Activated B cell treated with CpG ODN at 0.5 μM for 24 hours (primary cell): ENCODE measurements at regions of chr1 and their contacts with region 1.

Region 1: GRCh38 chr1:109426278-109427170 is at the start of gene PSMA5:
- DNase-seq: peak; percentile 81
- ATAC-seq: peak; percentile 97
- H3K4me3 Mint-ChIP-seq: peak within 1 kb of the TSS; percentile 96
- H3K27ac Mint-ChIP-seq: peak within 1 kb of the TSS; percentile 97
- H3K4me1 Mint-ChIP-seq: peaks cover 37% of the 10 kb centered on the region
- H3K27me3 Mint-ChIP-seq: no peaks in the 10 kb centered on the region
- CTCF ChIP-seq: no peak
- total RNA-seq, gene PSMA5: 105 and 125 TPM in 2 replicates

Region 2: DNA sequence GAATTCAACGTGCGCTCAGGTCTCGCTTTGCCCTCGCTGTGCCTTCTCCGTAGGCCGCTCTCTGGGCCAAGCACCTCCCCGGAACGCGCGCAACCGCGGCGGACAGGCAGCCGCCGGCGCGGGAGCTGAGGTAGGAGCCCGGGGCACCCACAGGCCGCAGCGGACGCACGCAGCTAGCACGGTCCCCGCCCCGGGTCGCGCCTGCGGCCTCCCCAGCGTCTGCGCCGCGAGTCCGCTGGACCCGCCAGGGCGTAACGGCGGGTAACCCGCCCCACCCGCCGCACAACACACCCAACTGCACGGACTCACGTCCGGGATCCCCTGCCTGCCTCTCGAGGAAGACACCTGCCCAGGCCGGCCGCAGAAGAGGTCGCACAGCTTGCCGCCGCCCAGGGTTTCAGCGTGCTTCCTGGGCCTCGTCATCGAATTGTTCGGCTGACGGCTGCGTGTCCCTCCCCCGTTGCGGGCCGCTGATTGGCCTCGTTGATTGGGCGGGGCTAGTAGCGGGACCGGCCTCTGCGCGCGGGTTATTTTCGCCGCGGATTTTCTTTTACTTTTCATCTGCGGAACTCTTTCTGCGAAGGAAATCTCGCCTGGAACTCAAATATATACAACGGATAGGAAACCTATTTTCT is 463.4 kb before region 1 on chr1 and contains the start of gene CLCC1:
- CTCF ChIA-PET with region 1: no interaction called
- POLR2A ChIA-PET with region 1: no interaction called
- intact Hi-C with region 1: loop called (anchors 2 kb)
- DNase-seq: peak; percentile 84
- ATAC-seq: peak; percentile 94
- H3K4me3 Mint-ChIP-seq: peak within 1 kb of the TSS; percentile 88
- H3K27ac Mint-ChIP-seq: peak within 1 kb of the TSS; percentile 91
- H3K4me1 Mint-ChIP-seq: peaks cover 35% of the 10 kb centered on the region
- H3K27me3 Mint-ChIP-seq: no peaks in the 10 kb centered on the region
- CTCF ChIP-seq: no peak
- total RNA-seq, gene CLCC1: 19.5 and 28.3 TPM in 2 replicates

Region 3: GRCh38 chr1:109099938-109100773 is 326.4 kb before region 1 on chr1:
- CTCF ChIA-PET with region 1: no interaction called
- POLR2A ChIA-PET with region 1: interaction called, 4 read pairs
- intact Hi-C with region 1: loop called (anchors 1 kb)
- DNase-seq: peak; percentile 93
- ATAC-seq: peak; percentile 88
- H3K4me3 Mint-ChIP-seq: peak overlapping the region; percentile 95
- H3K27ac Mint-ChIP-seq: peak overlapping the region; percentile 98
- H3K4me1 Mint-ChIP-seq: peaks cover 19% of the 10 kb centered on the region
- H3K27me3 Mint-ChIP-seq: no peaks in the 10 kb centered on the region
- CTCF ChIP-seq: peak; percentile 37

Region 4: DNA sequence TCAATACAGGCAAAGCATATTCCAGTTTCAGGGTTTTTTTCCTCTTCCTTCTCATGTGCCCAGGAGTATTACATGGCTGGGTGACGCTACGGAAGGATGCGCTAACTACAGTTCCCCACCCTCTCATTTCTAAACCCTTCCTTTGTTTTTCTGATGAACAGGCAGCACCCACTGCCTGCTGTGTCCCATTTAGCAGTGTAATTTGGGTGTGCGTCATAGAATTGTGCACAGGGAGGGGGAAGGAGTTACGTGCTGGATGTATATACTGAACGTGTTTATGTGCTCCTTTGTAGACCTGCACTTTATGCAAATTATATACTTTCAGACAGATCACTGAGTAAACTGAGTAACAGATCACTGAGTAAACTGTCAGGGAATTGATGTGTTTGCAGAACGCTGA is 268.1 kb before region 1 on chr1:
- CTCF ChIA-PET with region 1: no interaction called
- POLR2A ChIA-PET with region 1: no interaction called
- intact Hi-C with region 1: no loop called
- DNase-seq: no peak
- ATAC-seq: no peak
- H3K4me3 Mint-ChIP-seq: no peak overlapping the region
- H3K27ac Mint-ChIP-seq: no peak overlapping the region
- H3K4me1 Mint-ChIP-seq: peaks cover 17% of the 10 kb centered on the region
- H3K27me3 Mint-ChIP-seq: no peaks in the 10 kb centered on the region
- CTCF ChIP-seq: no peak

Region 5: DNA sequence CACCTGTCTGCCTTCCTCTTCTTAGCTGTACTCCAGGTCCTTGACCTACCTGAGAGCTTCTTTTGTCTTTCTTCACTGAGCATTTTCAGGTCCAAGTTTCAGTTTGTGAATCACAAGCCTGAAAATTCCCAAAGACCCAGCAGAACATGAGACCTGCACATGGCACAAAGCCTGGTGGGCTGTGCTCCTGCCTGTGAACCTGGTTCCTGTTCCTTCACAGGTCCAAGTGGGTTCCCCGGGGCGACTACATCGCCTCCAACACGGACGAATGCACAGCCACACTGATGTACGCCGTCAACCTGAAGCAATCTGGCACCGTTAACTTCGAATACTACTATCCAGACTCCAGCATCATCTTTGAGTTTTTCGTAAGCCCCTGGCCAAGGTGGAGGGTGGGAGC is 254.9 kb before region 1 on chr1:
- CTCF ChIA-PET with region 1: no interaction called
- POLR2A ChIA-PET with region 1: no interaction called
- intact Hi-C with region 1: no loop called
- DNase-seq: no peak
- ATAC-seq: no peak
- H3K4me3 Mint-ChIP-seq: no peak overlapping the region
- H3K27ac Mint-ChIP-seq: no peak overlapping the region
- H3K4me1 Mint-ChIP-seq: no peaks in the 10 kb centered on the region
- H3K27me3 Mint-ChIP-seq: peaks cover 18% of the 10 kb centered on the region
- CTCF ChIP-seq: no peak

Region 6: DNA sequence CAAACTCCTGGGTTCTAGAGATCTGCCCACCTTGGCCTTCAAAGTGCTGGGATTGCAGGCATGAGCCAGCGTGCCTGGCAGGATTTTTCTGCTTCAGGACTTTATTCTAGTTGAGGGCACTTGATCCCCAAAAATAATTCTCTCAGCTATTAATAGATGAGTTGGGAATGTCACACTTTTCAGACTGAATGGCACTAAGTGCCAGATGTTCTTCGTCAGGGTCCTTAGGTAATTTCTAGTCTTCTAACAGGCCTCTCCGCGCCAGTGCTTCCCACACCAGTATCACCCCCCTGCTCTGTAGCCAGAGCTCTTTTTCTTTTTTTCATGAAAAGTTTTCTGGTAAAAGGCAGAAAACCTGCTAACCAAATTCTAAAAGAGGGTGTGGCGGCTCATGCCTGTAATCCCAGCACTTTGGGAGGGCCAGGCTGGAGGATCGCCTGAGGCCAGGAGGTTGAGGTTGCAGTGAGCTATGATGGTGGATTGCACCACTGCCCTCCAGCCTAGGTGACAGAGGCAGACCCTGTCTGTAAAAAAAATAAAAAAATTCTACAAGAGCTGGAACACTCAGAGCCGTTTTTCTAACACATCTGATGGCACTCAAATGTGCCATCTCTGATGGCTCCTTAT is 218.9 kb before region 1 on chr1:
- CTCF ChIA-PET with region 1: no interaction called
- POLR2A ChIA-PET with region 1: no interaction called
- intact Hi-C with region 1: no loop called
- DNase-seq: no peak
- ATAC-seq: no peak
- H3K4me3 Mint-ChIP-seq: no peak overlapping the region
- H3K27ac Mint-ChIP-seq: no peak overlapping the region
- H3K4me1 Mint-ChIP-seq: no peaks in the 10 kb centered on the region
- H3K27me3 Mint-ChIP-seq: peaks cover 2% of the 10 kb centered on the region
- CTCF ChIP-seq: no peak

Region 7: DNA sequence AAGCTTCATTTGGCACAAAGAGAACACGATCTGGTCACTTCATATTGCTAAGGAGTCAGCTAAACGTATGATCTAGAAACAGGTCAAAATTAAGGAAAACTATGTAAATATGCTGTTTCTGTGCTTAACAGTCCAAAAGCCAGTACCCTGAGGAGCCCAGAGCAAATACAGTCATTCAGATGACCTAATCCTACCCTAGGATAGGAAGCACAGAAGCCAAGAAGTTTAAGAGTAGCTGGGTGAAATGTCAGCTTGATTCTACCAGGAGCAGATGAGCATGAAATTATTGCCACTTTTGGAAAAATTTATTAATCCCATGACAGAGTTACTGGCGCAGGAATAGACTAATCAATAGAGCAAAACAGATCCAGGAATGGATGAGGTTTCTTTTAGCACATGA is 47.1 kb before region 1 on chr1:
- CTCF ChIA-PET with region 1: no interaction called
- POLR2A ChIA-PET with region 1: no interaction called
- intact Hi-C with region 1: no loop called
- DNase-seq: no peak
- ATAC-seq: no peak
- H3K4me3 Mint-ChIP-seq: no peak overlapping the region
- H3K27ac Mint-ChIP-seq: no peak overlapping the region
- H3K4me1 Mint-ChIP-seq: no peaks in the 10 kb centered on the region
- H3K27me3 Mint-ChIP-seq: peaks cover 10% of the 10 kb centered on the region
- CTCF ChIP-seq: no peak

Region 8: DNA sequence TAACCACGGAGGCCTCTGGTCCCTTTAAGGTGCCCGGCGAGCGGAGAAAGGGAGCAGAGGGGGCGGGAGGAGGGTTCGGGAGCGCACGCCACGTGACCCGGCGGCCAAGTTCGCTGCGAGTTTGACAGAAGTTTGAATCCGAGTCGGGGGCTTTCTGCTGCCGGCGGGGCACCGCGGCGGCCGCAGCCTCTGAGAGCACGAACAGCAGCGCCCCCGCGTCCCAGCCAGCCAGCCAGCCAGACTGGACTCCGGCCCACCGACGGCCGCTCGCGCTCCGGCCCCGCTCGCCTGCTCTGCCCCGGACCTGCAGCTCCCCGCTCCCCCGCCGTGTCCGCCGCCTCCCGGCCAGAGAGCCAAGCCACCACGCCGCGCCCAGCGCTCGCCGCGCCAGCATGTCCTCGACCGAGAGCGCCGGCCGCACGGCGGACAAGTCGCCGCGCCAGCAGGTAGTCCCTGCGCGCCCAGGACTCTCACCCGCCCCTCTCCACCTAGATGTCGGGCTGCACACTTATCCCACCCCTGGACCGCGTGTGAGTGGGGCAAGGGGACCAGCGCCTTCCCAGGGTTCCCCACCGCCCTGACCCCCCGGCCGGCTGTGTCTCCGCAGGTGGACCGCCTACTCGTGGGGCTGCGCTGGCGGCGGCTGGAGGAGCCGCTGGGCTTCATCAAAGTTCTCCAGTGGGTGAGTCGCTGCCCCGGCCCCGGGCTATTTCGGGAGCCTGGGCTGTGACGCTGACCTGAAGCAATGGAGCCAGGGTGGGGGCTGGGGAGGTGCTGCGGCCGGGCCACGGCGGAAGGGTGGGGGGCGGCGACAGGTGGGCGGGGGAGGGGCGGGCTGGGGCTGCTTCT is 40.2 kb after region 1 on chr1 and contains the start of gene SYPL2:
- CTCF ChIA-PET with region 1: no interaction called
- POLR2A ChIA-PET with region 1: no interaction called
- intact Hi-C with region 1: loop called (anchors 5 kb)
- DNase-seq: peak; percentile 31
- ATAC-seq: peak; percentile 40
- H3K4me3 Mint-ChIP-seq: peak within 1 kb of the TSS; percentile 48
- H3K27ac Mint-ChIP-seq: no peak within 1 kb of the TSS
- H3K4me1 Mint-ChIP-seq: peaks cover 5% of the 10 kb centered on the region
- H3K27me3 Mint-ChIP-seq: peaks cover 58% of the 10 kb centered on the region
- CTCF ChIP-seq: no peak
- total RNA-seq, gene SYPL2: not detected in 2 replicates

Region 9: DNA sequence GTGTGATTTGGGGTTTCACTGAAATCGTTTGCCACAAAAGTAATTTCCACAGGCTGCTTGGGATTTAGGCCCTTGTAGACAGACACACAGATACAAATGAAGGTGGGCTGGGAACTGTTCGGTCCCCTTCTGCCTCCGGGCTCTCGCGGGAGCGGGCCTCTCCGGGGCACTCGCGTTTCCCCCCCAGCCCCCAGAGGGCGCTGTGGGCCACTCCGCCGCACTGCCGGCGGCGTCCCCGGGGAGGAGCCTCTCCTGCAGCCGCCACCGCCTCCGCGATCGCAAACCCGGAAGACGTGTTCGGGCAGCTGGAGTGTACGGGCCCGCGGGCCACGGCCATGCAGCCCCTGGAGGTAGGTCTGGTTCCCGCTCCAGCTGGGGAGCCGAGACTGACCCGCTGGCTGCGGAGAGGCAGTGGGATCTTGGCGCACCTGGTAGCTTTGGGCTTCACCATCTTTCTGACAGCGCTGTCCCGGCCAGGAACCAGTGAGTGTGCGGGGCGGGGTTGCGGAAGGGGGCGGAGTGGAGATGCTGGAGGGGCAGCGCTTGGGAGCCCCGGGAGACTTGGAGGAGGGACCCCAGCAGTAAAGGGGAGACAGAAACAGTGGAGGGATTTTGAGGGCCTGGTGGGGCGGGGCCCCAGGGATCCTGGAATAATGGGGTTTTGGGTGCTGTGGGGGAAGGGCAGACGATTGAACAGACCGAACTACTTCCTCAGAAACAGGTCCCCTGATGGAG is 67.4 kb after region 1 on chr1 and contains the start of gene CYB561D1:
- CTCF ChIA-PET with region 1: interaction called, 3 read pairs
- POLR2A ChIA-PET with region 1: interaction called, 8 read pairs
- intact Hi-C with region 1: loop called (anchors 1 kb)
- DNase-seq: peak; percentile 95
- ATAC-seq: peak; percentile 89
- H3K4me3 Mint-ChIP-seq: peak within 1 kb of the TSS; percentile 98
- H3K27ac Mint-ChIP-seq: peak within 1 kb of the TSS; percentile 91
- H3K4me1 Mint-ChIP-seq: peaks cover 43% of the 10 kb centered on the region
- H3K27me3 Mint-ChIP-seq: no peaks in the 10 kb centered on the region
- CTCF ChIP-seq: peak; percentile 81
- total RNA-seq, gene CYB561D1: 17.1 and 18.1 TPM in 2 replicates

Region 10: GRCh38 chr1:109620841-109621286 is 194.3 kb after region 1 on chr1:
- CTCF ChIA-PET with region 1: no interaction called
- POLR2A ChIA-PET with region 1: no interaction called
- intact Hi-C with region 1: loop called (anchors 10 kb)
- DNase-seq: peak; percentile 80
- ATAC-seq: peak; percentile 67
- H3K4me3 Mint-ChIP-seq: peak overlapping the region; percentile 90
- H3K27ac Mint-ChIP-seq: peak overlapping the region; percentile 93
- H3K4me1 Mint-ChIP-seq: peaks cover 78% of the 10 kb centered on the region
- H3K27me3 Mint-ChIP-seq: no peaks in the 10 kb centered on the region
- CTCF ChIP-seq: no peak